Vagina (tissue), 2 donors: ENCODE measurements at regions of chr1 and their contacts with region 1.

Region 1: DNA sequence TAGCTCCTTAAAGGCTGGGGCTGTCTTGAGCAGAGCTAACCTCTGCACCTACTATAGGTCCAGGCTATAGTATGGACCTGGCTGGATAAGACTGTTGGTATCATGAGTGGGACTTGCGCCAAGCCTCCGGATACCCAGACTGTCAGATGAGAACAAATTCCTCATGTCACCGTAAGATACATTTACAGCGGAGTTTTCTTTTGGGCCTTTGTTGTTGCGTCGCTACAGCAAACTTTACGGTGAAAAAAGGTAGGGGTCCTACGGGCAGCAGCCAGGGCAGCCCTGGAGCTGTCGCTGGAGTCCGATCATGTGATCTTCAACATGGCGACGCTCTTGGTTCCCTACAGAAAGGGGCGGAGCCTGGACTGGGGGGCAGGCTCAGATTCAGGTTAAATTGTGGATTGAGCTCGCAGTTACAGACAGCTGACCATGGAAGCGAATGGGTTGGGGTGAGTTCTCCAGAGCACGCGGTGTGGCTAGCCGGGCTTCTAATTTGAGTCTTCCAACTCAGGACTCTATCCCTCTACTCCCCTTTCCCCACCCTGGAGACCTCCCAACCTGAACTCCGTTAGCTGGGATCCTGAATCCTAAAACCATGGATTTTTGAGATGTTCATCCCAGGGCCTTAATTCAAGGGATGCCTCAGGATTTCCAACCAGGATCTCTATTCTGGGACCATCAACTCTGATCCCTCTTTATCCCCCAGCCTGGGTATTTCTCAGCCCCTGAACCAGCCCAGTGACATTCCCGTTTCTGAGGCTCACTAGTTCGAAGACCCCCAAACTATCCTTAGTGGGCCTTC is at the start of gene UROD:
- DNase-seq: peak in 1 of 2 donors; percentile 97
- H3K4me3 ChIP-seq: peak within 1 kb of the TSS; percentile 76 to 99
- H3K27ac ChIP-seq: peak within 1 kb of the TSS; percentile 73
- H3K4me1 ChIP-seq: peaks cover 46% of the 10 kb centered on the region
- H3K27me3 ChIP-seq: no peaks in the 10 kb centered on the region
- CTCF ChIP-seq: no peak
- POLR2A ChIP-seq: no peak
- total RNA-seq, gene UROD: 65.6 TPM

Region 2: GRCh38 chr1:43227143-43227764 is 1784.8 kb before region 1 on chr1:
- intact Hi-C with region 1: no loop called
- DNase-seq: no peak
- H3K4me3 ChIP-seq: no peak overlapping the region
- H3K27ac ChIP-seq: peak overlapping the region; percentile 4
- H3K4me1 ChIP-seq: peaks cover 9% of the 10 kb centered on the region
- H3K27me3 ChIP-seq: no peaks in the 10 kb centered on the region
- CTCF ChIP-seq: peak; percentile 75 to 88 (median 85)
- POLR2A ChIP-seq: no peak

Region 3: DNA sequence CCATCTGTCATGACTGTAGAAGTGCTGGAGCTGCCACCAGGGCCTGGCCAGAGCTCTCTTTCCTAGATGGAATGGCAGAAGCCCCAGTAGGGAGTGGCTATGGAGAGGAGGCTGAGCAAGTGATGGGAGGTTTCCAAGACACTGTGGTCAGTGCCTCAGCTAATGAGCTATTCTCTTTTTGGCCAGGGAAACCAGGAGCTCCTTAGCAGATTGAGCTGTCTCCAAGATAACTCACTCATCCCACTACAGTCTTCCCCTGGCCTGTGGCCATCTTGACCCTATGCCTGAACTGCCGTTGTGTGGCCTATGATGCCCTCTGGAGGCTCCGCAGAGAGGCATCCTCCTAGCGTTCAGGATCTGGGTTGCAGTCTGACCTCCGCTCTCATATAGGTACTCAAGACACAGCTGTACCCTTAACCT is 717.4 kb before region 1 on chr1:
- intact Hi-C with region 1: no loop called
- DNase-seq: peak in 1 of 2 donors; percentile 88
- H3K4me3 ChIP-seq: no peak overlapping the region
- H3K27ac ChIP-seq: no peak overlapping the region
- H3K4me1 ChIP-seq: peaks cover 14% of the 10 kb centered on the region
- H3K27me3 ChIP-seq: no peaks in the 10 kb centered on the region
- CTCF ChIP-seq: peak in 2 of 3 experiments; percentile 22 to 42
- POLR2A ChIP-seq: no peak

Region 4: GRCh38 chr1:44739361-44740178 is 272.5 kb before region 1 on chr1 and contains the start of gene KIF2C:
- intact Hi-C with region 1: no loop called
- DNase-seq: peak in 1 of 2 donors; percentile 95
- H3K4me3 ChIP-seq: peak within 1 kb of the TSS; percentile 53 to 66
- H3K27ac ChIP-seq: peak within 1 kb of the TSS; percentile 85
- H3K4me1 ChIP-seq: peaks cover 8% of the 10 kb centered on the region
- H3K27me3 ChIP-seq: no peaks in the 10 kb centered on the region
- CTCF ChIP-seq: no peak
- POLR2A ChIP-seq: peak in 1 of 2 donors; percentile 42
- total RNA-seq, gene KIF2C: 3.4 TPM

Region 5: DNA sequence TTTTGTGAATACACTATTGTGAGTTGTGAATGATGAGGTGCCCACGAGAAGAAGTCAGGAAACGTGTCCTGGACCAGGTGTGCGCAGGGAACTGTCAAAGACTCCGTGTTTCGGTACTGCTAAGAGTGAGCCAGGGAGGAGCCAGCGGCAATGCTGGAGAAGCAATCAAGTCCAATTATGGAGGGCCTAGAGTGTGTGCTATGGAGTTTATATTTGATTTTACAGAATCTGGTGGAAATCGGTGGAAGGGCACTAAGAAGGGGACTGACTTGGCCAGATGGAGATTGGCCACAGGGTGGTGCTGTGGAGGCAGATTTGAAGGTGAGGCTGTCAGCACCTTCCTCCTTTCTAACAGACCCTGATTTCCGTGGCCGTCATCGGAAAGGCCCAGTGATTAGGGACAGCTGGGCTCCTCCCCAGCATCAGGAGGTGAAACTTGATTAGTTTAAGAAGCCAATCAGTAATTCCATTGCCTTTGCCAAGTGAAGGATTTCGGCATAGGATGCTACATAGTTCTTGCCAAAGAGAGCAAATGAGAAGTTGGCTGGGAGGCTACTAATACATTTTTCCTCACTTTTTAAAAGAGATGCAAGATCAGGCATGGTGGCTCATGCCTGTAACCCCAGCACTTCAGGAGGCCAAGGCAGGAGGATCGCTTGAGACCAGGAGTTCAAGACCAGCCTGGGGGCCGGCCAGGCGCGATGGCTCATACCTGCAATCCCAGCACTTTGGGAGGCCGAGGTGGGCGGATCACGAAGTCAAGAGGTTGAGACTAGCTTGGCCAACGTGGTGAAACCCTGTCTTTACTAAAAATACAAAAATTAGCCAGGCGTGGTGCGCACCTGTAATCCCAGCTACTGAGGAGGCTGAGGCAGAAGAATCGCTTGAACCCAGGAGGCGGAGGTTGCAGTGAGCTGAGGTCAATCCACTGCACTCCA is 176.0 kb before region 1 on chr1:
- intact Hi-C with region 1: loop called (anchors 10 kb)
- DNase-seq: no peak
- H3K4me3 ChIP-seq: no peak overlapping the region
- H3K27ac ChIP-seq: no peak overlapping the region
- H3K4me1 ChIP-seq: no peaks in the 10 kb centered on the region
- H3K27me3 ChIP-seq: no peaks in the 10 kb centered on the region
- CTCF ChIP-seq: peak; percentile 33 to 76 (median 66)
- POLR2A ChIP-seq: no peak

Region 6: GRCh38 chr1:45037456-45037855 is 25.4 kb after region 1 on chr1:
- intact Hi-C with region 1: no loop called
- DNase-seq: no peak
- H3K4me3 ChIP-seq: no peak overlapping the region
- H3K27ac ChIP-seq: no peak overlapping the region
- H3K4me1 ChIP-seq: no peaks in the 10 kb centered on the region
- H3K27me3 ChIP-seq: no peaks in the 10 kb centered on the region
- CTCF ChIP-seq: no peak
- POLR2A ChIP-seq: no peak

Region 7: GRCh38 chr1:45303582-45304310 is 291.7 kb after region 1 on chr1:
- intact Hi-C with region 1: loop called (anchors 2 kb)
- DNase-seq: peak in 1 of 2 donors; percentile 97
- H3K4me3 ChIP-seq: peak overlapping the region; percentile 58 to 79
- H3K27ac ChIP-seq: peak overlapping the region; percentile 83
- H3K4me1 ChIP-seq: peaks cover 17% of the 10 kb centered on the region
- H3K27me3 ChIP-seq: no peaks in the 10 kb centered on the region
- CTCF ChIP-seq: peak; percentile 27 to 61 (median 58)
- POLR2A ChIP-seq: peak in 1 of 2 donors; percentile 55

Region 8: DNA sequence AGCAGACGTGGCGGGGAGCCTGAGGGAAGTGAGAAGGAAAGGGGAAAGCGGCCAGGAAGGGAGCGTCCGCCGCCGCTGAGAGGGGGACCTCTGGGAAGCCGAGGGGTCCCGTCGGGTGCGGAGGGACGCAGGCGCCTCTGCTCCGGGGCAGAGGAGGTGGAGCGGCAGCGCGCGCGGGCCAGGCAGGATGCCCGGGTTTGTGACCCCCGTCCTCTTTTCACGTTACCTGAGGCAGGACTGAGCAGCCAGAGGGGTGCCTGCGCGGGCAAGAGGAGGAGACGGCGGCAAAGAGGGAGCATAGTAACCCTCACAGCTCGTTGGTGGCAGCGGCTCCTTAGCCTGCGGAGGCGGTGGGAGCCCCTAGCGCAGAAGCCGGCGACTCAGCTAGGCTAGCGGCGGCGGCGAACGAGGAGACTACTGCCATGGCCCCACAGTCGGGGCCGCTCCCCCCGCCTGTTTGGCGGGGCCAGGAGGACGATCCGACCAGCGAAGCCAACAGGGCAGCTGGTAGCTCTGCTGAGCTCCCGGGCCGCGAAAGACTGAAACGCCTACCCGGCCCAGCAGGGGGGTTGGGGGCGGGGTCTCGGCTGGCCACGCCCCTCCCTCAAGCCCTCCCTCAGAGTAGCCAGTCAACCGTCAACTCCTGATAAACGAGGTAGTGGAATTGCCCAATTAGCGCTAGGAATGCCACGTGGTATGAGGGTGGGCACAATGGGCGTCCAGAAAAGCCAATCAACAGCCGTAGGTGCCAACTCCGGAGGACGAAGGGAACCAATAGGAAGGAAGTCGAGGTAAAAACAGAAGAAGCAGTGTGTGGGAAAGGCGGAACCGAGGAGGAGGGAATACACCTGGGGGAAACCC is 478.8 kb after region 1 on chr1 and contains the start of gene TESK2:
- intact Hi-C with region 1: loop called (anchors 5 kb)
- DNase-seq: peak; percentile 100
- H3K4me3 ChIP-seq: peak within 1 kb of the TSS; percentile 83 to 86
- H3K27ac ChIP-seq: peak within 1 kb of the TSS; percentile 90
- H3K4me1 ChIP-seq: peaks cover 24% of the 10 kb centered on the region
- H3K27me3 ChIP-seq: no peaks in the 10 kb centered on the region
- CTCF ChIP-seq: peak in 2 of 3 experiments; percentile 15 to 36
- POLR2A ChIP-seq: peak in 1 of 2 donors; percentile 77
- total RNA-seq, gene TESK2: 13.5 TPM

Region 9: GRCh38 chr1:45569962-45570581 is 558.0 kb after region 1 on chr1:
- intact Hi-C with region 1: loop called (anchors 10 kb)
- DNase-seq: no peak
- H3K4me3 ChIP-seq: no peak overlapping the region
- H3K27ac ChIP-seq: peak overlapping the region; percentile 20
- H3K4me1 ChIP-seq: peaks cover 17% of the 10 kb centered on the region
- H3K27me3 ChIP-seq: no peaks in the 10 kb centered on the region
- CTCF ChIP-seq: peak; percentile 87 to 94 (median 90)
- POLR2A ChIP-seq: no peak